Natural killer cell (primary cell): ENCODE measurements at regions of chr16 and their contacts with region 1.

Region 1: DNA sequence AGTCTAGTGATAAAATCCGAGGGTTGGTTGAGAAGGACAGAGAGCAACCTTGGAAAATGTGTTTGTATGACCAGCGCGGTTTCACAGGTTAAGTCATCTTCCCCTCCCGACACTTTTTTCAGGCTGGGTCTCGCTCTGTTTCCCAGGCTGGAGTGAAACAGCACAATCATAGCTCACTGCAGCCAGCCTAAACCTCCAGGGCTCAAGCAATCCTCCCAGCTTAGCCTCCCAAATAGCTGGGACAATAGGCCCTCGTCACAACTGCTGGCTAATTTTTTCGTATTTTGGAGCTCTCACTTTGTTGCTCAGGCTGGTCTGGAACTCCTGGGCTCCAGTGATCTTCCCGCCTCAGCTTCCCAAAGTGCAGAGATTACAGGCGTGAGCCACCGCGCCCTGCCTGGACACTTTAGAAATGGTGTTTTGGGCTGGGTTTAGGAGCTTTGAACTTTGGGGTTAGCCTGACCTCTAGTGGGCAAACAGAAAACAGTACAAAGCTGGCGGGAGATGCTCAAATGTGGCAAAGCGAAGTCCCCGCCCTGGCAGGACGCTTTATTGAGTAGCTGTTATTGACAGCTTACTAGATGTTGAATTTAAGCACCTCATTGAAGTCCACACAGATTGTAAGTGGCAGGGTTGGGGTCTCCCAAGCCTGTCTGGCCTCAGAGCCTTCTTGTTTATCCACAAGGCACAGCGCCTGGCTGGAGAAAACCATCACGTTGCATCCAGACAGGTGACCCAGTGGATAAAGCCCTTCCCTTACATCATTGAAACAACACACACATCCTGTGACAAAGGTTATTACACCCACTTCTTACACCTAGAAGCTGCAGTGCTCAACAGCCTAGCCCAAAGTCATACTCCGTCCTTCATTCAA is 34.7 kb upstream of the RBBP6 start:
- DNase-seq: peak; percentile 30 to 82
- ATAC-seq: peak; percentile 76 to 93 (median 87)
- H3K4me3 ChIP-seq: no peak overlapping the region
- H3K4me3 Mint-ChIP-seq: no peak overlapping the region
- H3K27ac ChIP-seq: no peak overlapping the region
- H3K27ac Mint-ChIP-seq: no peak overlapping the region
- H3K4me1 ChIP-seq: no peaks in the 10 kb centered on the region
- H3K4me1 Mint-ChIP-seq: no peaks in the 10 kb centered on the region
- H3K27me3 ChIP-seq: no peaks in the 10 kb centered on the region
- H3K27me3 Mint-ChIP-seq: peaks cover 0 to 4% of the 10 kb centered on the region in 2 donors
- CTCF ChIP-seq: peak; percentile 71

Region 2: GRCh38 chr16:23182460-23183309 is 1322.0 kb before region 1 on chr16 and contains the start of gene SCNN1G:
- intact Hi-C with region 1: loop called (anchors 10 kb)
- DNase-seq: peak; percentile 57 to 83
- ATAC-seq: peak; percentile 86 to 97 (median 97)
- H3K4me3 ChIP-seq: no peak within 1 kb of the TSS
- H3K4me3 Mint-ChIP-seq: peak within 1 kb of the TSS; percentile 38
- H3K27ac ChIP-seq: no peak within 1 kb of the TSS
- H3K27ac Mint-ChIP-seq: no peak within 1 kb of the TSS
- H3K4me1 ChIP-seq: peaks cover 11% of the 10 kb centered on the region
- H3K4me1 Mint-ChIP-seq: peaks cover 6 to 7% of the 10 kb centered on the region in 2 donors
- H3K27me3 ChIP-seq: peaks cover 23% of the 10 kb centered on the region
- H3K27me3 Mint-ChIP-seq: peaks cover 48 to 73% of the 10 kb centered on the region in 2 donors
- CTCF ChIP-seq: peak; percentile 67
- total RNA-seq, gene SCNN1G: not detected

Region 3: GRCh38 chr16:23734176-23734893 is 770.4 kb before region 1 on chr16:
- intact Hi-C with region 1: loop called (anchors 1 kb)
- DNase-seq: no peak
- ATAC-seq: no peak
- H3K4me3 ChIP-seq: no peak overlapping the region
- H3K4me3 Mint-ChIP-seq: no peak overlapping the region
- H3K27ac ChIP-seq: no peak overlapping the region
- H3K27ac Mint-ChIP-seq: no peak overlapping the region
- H3K4me1 ChIP-seq: no peaks in the 10 kb centered on the region
- H3K4me1 Mint-ChIP-seq: peaks cover 0 to 5% of the 10 kb centered on the region in 2 donors
- H3K27me3 ChIP-seq: no peaks in the 10 kb centered on the region
- H3K27me3 Mint-ChIP-seq: peaks cover 7 to 8% of the 10 kb centered on the region in 2 donors
- CTCF ChIP-seq: no peak

Region 4: DNA sequence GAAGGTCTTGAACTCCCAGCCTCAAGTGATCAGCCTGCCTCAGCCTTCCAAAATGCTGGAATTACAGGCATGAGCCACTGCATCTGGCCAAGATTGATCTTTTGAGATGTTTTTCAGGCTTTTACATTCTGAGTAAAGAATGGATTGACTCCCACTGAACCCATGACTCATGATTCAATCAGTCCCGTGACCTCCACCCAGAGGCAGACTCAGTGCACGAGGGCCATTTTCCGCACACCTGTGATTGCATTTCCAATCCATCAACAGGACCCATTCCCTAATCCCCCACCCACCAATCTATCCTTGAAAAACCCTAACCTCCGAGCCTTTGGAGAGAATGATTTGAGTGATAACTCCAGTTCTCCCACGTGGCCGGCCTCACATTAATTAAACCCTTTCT is 709.3 kb before region 1 on chr16:
- intact Hi-C with region 1: loop called (anchors 5 kb)
- DNase-seq: no peak
- ATAC-seq: no peak
- H3K4me3 ChIP-seq: no peak overlapping the region
- H3K4me3 Mint-ChIP-seq: no peak overlapping the region
- H3K27ac ChIP-seq: no peak overlapping the region
- H3K27ac Mint-ChIP-seq: no peak overlapping the region
- H3K4me1 ChIP-seq: no peaks in the 10 kb centered on the region
- H3K4me1 Mint-ChIP-seq: no peaks in the 10 kb centered on the region
- H3K27me3 ChIP-seq: no peaks in the 10 kb centered on the region
- H3K27me3 Mint-ChIP-seq: peaks cover 0 to 11% of the 10 kb centered on the region in 2 donors
- CTCF ChIP-seq: no peak

Region 5: DNA sequence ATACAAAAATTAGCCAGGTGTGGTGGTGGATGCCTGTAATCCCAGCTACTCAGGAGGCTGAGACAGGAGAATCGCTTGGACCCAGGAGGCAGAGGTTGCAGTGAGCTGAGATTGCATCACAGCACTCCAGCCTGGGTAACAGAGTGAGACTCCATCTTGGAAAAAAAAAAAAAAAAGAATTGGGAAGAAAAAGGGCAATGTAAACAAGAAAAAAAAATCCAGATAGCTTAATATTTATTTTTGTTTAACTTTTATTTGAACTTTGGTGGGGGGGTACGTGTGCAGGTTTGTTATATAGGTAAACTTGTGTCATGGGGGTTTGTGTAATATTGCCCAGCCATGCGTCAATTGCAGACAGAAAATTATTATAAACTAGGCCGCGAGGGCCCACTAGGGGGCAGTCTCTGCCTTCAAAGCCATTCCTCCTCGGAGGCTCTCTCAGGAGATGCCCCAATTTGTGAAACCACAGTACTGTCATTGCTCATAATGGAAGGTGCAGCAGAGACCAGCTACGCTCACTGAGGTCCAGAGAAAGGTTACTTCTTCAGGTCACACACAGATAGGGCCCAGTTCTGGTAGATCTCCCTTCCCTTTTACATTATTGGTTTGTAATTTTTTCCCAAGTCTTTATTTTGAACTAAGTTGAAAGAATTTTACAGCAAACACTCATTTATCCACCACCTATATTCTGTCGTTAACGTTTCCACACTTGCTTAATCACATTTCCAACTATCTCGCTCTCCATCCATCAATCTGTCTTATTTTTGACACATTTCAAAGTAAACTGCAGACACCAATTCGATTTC is 462.7 kb before region 1 on chr16:
- intact Hi-C with region 1: loop called (anchors 1 kb)
- DNase-seq: peak; percentile 72 to 86
- ATAC-seq: peak; percentile 94 to 99 (median 98)
- H3K4me3 ChIP-seq: no peak overlapping the region
- H3K4me3 Mint-ChIP-seq: no peak overlapping the region
- H3K27ac ChIP-seq: no peak overlapping the region
- H3K27ac Mint-ChIP-seq: peak overlapping the region in 1 of 2 donors; percentile 21
- H3K4me1 ChIP-seq: peaks cover 4% of the 10 kb centered on the region
- H3K4me1 Mint-ChIP-seq: peaks cover 25% of the 10 kb centered on the region in 2 donors
- H3K27me3 ChIP-seq: no peaks in the 10 kb centered on the region
- H3K27me3 Mint-ChIP-seq: no peaks in the 10 kb centered on the region
- CTCF ChIP-seq: peak; percentile 88